Body of pancreas (tissue), 4 donors: ENCODE measurements at regions of chr7 and their contacts with region 1.

Region 1: GRCh38 chr7:102236592-102237287 is 49.9 kb upstream of the SH2B2 start:
- DNase-seq: peak; percentile 69 to 72 (median 71)
- ATAC-seq: peak; percentile 51
- H3K4me3 ChIP-seq: no peak overlapping the region
- H3K27ac ChIP-seq: no peak overlapping the region
- H3K4me1 ChIP-seq: peaks cover 28% of the 10 kb centered on the region
- H3K27me3 ChIP-seq: no peaks in the 10 kb centered on the region
- CTCF ChIP-seq: peak; percentile 72 to 88 (median 79)
- POLR2A ChIP-seq: no peak

Region 2: DNA sequence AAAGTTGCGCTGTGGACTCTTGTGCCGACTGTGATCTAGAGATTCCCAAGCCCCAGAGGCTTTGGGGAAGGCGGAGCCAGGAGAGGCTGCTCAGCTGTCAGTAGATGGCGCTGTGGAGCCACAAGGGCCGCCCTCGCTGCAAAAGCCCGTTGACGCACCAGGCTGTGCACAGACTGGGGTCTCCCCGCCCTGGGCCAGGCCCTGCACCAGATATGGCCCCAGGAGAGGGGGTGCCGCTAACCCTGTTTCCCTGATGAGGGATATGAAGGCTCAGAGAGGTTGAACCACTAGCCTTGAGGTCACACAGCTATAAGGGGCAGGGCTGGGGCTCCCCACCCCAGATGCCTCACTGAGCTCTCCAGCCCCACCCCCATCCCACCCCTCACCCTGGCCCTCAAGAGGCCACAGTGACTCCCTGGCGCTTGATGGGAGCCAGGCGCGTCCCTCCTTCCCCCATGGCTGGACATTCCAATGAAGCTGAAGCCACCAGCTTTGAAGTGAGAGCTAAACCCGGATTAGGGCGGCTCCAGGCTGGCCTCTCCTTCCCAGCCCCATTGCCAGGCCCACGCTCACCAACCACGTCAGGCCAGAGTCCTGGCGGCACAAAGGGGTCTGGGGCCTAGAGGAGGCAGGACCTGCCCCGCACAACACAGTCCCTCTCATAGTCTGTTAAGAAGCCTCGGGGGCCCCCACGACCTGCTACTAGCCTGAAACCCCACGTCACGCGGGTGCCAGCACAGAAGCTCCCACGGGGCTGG is 634.1 kb before region 1 on chr7:
- intact Hi-C with region 1: loop called (anchors 10 kb)
- DNase-seq: peak; percentile 75 to 80 (median 78)
- ATAC-seq: peak; percentile 56
- H3K4me3 ChIP-seq: no peak overlapping the region
- H3K27ac ChIP-seq: no peak overlapping the region
- H3K4me1 ChIP-seq: peaks cover 19% of the 10 kb centered on the region
- H3K27me3 ChIP-seq: no peaks in the 10 kb centered on the region
- CTCF ChIP-seq: peak; percentile 71 to 95 (median 85)
- POLR2A ChIP-seq: no peak

Region 3: GRCh38 chr7:102079140-102080018 is 157.4 kb before region 1 on chr7:
- intact Hi-C with region 1: no loop called
- DNase-seq: no peak
- ATAC-seq: no peak
- H3K4me3 ChIP-seq: no peak overlapping the region
- H3K27ac ChIP-seq: no peak overlapping the region
- H3K4me1 ChIP-seq: no peaks in the 10 kb centered on the region
- H3K27me3 ChIP-seq: no peaks in the 10 kb centered on the region
- CTCF ChIP-seq: no peak
- POLR2A ChIP-seq: no peak